Heart right ventricle (tissue), 16 donors: ENCODE measurements at regions of chr4 and their contacts with region 1.

Region 1: GRCh38 chr4:145396581-145396980 is 85.1 kb upstream of the SMAD1 start:
- DNase-seq: no peak
- ATAC-seq: no peak
- H3K4me3 ChIP-seq: no peak overlapping the region
- H3K27ac ChIP-seq: no peak overlapping the region
- H3K4me1 ChIP-seq: peaks cover 0 to 6% (median 0%) of the 10 kb centered on the region in 9 donors
- H3K27me3 ChIP-seq: no peaks in the 10 kb centered on the region
- CTCF ChIP-seq: no peak

Region 2: DNA sequence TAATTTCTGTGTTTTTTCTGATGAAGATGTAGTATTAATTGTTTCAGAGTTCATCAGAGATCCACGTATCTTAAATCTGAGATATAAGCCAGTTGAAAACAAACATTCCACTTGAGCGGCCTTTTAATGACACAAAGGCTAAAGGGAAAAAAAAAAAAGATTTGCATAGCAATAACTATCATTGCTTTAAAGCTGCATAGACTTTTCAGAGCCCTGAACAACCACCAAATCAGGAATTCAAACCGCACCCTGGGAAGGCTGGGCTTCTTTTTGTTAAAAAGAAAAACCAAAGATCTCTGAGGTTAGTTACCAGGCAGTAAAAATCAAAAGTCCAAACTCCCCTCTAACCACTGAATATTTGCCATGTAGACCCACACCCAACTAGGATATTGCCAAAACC is 544.6 kb before region 1 on chr4:
- intact Hi-C with region 1: loop called in 1 of 10 experiments (anchors 5 kb)
- DNase-seq: no peak
- ATAC-seq: no peak
- H3K4me3 ChIP-seq: no peak overlapping the region
- H3K27ac ChIP-seq: no peak overlapping the region
- H3K4me1 ChIP-seq: no peaks in the 10 kb centered on the region
- H3K27me3 ChIP-seq: no peaks in the 10 kb centered on the region
- CTCF ChIP-seq: no peak

Region 3: DNA sequence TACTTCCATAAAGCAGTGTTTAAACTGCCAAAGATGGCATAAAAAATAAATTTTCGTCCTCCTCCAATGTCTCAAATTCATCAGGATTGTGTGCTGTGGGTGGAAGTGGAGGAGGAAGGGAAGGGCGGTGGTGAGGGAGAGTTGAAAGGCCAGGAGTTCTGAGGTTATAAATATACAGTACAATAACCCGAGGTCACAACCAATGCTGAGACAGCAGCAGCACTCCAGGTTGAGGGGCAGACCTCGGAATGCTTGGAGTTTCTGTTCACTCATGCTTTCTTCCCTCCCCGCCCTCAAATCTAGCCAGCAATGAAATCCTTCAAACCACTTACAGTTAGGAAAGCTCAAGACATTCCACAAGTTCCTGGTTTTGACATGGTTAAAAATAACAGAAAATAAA is 48.9 kb before region 1 on chr4:
- intact Hi-C with region 1: loop called in 1 of 10 experiments (anchors 5 kb)
- DNase-seq: no peak
- ATAC-seq: peak in 1 of 8 donors; percentile 58
- H3K4me3 ChIP-seq: no peak overlapping the region
- H3K27ac ChIP-seq: no peak overlapping the region
- H3K4me1 ChIP-seq: peaks cover 0 to 18% (median 0%) of the 10 kb centered on the region in 9 donors
- H3K27me3 ChIP-seq: no peaks in the 10 kb centered on the region
- CTCF ChIP-seq: no peak

Region 4: GRCh38 chr4:145602129-145602760 is 205.7 kb after region 1 on chr4:
- intact Hi-C with region 1: no loop called
- DNase-seq: no peak
- ATAC-seq: no peak
- H3K4me3 ChIP-seq: no peak overlapping the region
- H3K27ac ChIP-seq: no peak overlapping the region
- H3K4me1 ChIP-seq: no peaks in the 10 kb centered on the region
- H3K27me3 ChIP-seq: peaks cover 0 to 4% (median 0%) of the 10 kb centered on the region in 7 donors
- CTCF ChIP-seq: no peak

Region 5: DNA sequence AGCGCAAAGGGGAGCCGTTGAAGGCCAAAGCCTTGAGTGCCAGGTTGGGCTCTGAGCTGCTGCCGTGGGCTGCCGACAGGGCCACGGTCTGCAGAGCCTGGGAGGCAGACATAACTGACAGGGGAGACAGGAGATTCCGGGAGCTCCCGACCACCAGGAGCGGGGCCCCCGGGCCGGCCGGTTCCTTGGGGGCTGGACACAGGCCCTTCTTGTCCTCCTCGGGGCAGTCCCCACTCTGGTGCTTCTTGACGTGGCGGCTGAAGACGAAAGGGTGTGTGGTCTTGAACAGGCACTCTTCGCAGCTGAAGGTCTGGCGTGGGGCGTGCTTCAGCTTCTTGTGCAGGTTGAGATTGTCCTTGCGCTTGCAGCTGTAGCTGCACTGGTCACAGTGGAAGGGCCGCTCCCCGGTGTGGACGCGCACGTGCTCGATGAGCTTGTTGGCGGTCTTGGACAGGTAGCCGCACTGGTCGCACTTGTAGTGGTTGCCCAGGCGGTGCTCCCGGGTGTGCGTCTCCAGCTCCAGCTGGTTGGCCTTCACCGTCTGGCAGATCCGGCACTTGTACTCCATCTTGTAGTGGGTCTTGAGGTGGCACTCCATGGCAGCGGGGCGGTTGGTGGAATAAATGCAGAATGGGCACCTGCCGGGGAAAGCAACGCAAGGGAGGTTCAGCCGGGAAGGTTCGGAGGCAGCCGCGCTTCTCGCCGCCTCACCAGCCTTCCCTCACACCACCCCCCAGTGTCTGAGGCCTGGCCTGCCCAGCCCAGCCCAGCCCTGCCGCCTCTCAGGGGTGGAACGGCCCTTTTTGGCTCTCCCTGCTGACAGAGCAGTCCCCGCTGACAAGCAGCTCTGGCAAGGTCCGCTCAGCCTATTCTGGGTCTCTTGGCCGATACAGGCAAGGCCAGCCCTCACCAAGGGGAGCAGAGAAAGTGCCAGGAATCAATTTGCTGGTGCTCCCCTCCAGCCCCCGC is 364.7 kb after region 1 on chr4:
- intact Hi-C with region 1: no loop called
- DNase-seq: peak; percentile 58 to 68
- ATAC-seq: peak; percentile 93 to 99 (median 96)
- H3K4me3 ChIP-seq: no peak overlapping the region
- H3K27ac ChIP-seq: peak overlapping the region in 7 of 10 donors; percentile 46 to 75 (median 55)
- H3K4me1 ChIP-seq: peaks cover 0 to 5% (median 0%) of the 10 kb centered on the region in 9 donors
- H3K27me3 ChIP-seq: no peaks in the 10 kb centered on the region
- CTCF ChIP-seq: peak in 2 of 9 donors; percentile 11 to 21